RWPE1 (cell line): ENCODE measurements at regions of chr20 and their contacts with region 1.

Region 1: DNA sequence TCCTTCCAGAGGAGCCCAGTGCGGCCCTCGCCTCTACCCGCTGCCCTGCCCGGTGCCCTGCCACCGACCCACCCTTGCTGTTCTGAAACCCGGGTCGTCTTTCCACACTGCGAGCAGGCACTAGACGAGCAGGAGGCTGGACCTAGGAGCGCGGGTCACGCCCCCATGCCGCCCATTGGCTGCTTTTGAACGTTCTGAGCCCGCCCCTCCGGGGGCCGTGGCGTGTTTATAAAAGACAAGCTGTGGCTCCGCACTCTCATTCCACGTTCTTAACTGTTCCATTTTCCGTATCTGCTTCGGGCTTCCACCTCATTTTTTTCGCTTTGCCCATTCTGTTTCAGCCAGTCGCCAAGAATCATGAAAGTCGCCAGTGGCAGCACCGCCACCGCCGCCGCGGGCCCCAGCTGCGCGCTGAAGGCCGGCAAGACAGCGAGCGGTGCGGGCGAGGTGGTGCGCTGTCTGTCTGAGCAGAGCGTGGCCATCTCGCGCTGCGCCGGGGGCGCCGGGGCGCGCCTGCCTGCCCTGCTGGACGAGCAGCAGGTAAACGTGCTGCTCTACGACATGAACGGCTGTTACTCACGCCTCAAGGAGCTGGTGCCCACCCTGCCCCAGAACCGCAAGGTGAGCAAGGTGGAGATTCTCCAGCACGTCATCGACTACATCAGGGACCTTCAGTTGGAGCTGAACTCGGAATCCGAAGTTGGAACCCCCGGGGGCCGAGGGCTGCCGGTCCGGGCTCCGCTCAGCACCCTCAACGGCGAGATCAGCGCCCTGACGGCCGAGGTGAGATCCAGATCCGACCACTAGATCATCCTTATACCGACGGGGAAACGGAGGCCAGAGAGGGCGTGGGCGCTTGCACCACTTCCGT is at the start of gene ID1:
- DNase-seq: peak; percentile 99
- H3K27ac ChIP-seq: peak within 1 kb of the TSS; percentile 86
- CTCF ChIP-seq: no peak

Region 2: DNA sequence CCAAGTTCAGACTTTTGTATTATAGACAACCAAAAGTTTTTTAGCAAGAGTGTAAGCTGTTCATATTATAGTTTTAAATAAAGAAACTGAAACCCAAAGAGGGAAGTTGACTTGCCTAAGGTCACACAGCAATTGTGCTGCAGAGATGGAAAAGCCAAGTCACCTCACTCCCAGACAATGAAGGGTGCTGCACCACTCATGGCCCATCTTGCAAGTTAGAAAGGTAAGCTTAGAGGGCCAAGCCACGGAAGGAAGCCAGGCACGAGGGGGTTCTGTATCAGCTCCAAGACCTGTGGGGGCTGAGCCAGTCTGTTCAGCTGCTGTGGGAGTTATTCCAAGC is 131.2 kb before region 1 on chr20:
- CTCF ChIA-PET with region 1: no interaction called
- POLR2A ChIA-PET with region 1: no interaction called
- DNase-seq: no peak
- H3K27ac ChIP-seq: no peak overlapping the region
- CTCF ChIP-seq: no peak

Region 3: GRCh38 chr20:31566658-31567379 is 38.4 kb before region 1 on chr20:
- CTCF ChIA-PET with region 1: interaction called, 656 read pairs
- POLR2A ChIA-PET with region 1: interaction called, 46 read pairs
- DNase-seq: peak; percentile 80
- H3K27ac ChIP-seq: peak overlapping the region; percentile 93
- CTCF ChIP-seq: no peak

Region 4: GRCh38 chr20:31572701-31573554 is 32.3 kb before region 1 on chr20:
- CTCF ChIA-PET with region 1: interaction called, 656 read pairs
- POLR2A ChIA-PET with region 1: interaction called, 54 read pairs
- DNase-seq: peak; percentile 99
- H3K27ac ChIP-seq: peak overlapping the region; percentile 93
- CTCF ChIP-seq: no peak

Region 5: DNA sequence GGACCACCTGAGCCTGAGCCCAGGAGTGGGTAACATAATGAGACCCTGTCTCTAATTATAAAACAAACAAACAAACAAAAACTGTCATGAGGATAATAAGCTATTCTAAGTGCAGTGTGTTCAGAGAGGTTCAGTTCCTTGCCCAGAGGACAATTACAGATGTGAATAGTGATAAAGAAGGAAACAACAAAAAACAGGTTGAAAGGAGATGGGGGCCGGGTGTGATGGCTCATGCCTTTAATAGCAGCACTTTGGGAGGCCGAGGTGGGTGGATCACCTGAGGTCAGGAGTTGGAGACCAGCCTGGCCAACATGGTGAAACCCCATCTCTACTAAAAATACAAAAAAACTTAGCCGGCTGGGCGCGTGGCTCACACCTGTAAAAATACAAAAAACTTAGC is 13.5 kb after region 1 on chr20:
- CTCF ChIA-PET with region 1: no interaction called
- POLR2A ChIA-PET with region 1: no interaction called
- DNase-seq: no peak
- H3K27ac ChIP-seq: no peak overlapping the region
- CTCF ChIP-seq: no peak

Region 6: GRCh38 chr20:31747640-31748039 is 142.4 kb after region 1 on chr20:
- CTCF ChIA-PET with region 1: no interaction called
- POLR2A ChIA-PET with region 1: interaction called, 13 read pairs
- DNase-seq: no peak
- H3K27ac ChIP-seq: no peak overlapping the region
- CTCF ChIP-seq: no peak

Region 7: GRCh38 chr20:31770243-31770642 is 165.0 kb after region 1 on chr20:
- CTCF ChIA-PET with region 1: no interaction called
- POLR2A ChIA-PET with region 1: no interaction called
- DNase-seq: no peak
- H3K27ac ChIP-seq: no peak overlapping the region
- CTCF ChIP-seq: no peak